Right cardiac atrium (tissue), 5 donors: ENCODE measurements at regions of chr16 and their contacts with region 1.

Region 1: GRCh38 chr16:4253394-4254150 is 11.7 kb upstream of the SRL start:
- DNase-seq: peak; percentile 100
- ATAC-seq: peak; percentile 98
- H3K4me3 ChIP-seq: peak overlapping the region; percentile 58
- H3K27ac ChIP-seq: peak overlapping the region; percentile 89
- H3K4me1 ChIP-seq: no peaks in the 10 kb centered on the region
- H3K27me3 ChIP-seq: no peaks in the 10 kb centered on the region

Region 2: GRCh38 chr16:4200000-4200780 is 53.4 kb before region 1 on chr16:
- intact Hi-C with region 1: loop called (anchors 5 to 10 kb)
- DNase-seq: peak; percentile 63 to 84 (median 83)
- ATAC-seq: peak; percentile 78 to 79
- H3K4me3 ChIP-seq: no peak overlapping the region
- H3K27ac ChIP-seq: no peak overlapping the region
- H3K4me1 ChIP-seq: no peaks in the 10 kb centered on the region
- H3K27me3 ChIP-seq: no peaks in the 10 kb centered on the region